ENCODE measurements at regions of chr1 and their contacts with region 1.

Region 1: GRCh38 chr1:155050560-155051341 is at the start of gene ADAM15:
- DNase-seq: peak; percentile 73 to 97
- H3K4me3 ChIP-seq: peak within 1 kb of the TSS; percentile 84
- CTCF ChIP-seq: peak in 1 of 3 donors; percentile 84
- POLR2A ChIP-seq: no peak
- total RNA-seq, gene ADAM15: 232 to 289 (median 279) TPM

Region 2: DNA sequence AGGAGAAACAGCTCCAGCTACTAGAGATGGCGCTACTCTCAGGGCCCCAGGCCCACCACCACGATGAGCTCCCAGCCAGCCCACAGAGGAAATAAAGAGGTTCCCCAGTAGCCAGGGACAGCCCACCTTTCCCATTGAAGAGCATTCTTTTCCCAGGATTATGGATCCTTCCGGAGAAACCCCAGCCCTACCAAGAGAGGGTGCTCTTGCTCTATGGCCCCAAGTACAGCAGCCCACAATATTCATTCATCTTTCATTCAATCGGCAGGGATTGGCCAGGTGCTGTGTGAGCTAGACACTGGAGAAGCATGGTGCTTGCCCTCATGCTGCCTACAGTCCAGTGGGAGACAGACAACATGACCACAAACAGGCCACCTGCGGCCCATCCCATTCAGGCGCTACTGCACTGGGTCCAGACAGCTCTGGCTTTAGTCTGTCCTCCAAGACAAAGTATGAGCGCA is 144.1 kb before region 1 on chr1:
- intact Hi-C with region 1: loop called (anchors 5 kb)
- DNase-seq: peak in 1 of 2 donors; percentile 59
- H3K4me3 ChIP-seq: no peak overlapping the region
- CTCF ChIP-seq: no peak
- POLR2A ChIP-seq: no peak

Region 3: GRCh38 chr1:154955718-154956543 is 94.8 kb before region 1 on chr1 and contains the start of gene PBXIP1:
- intact Hi-C with region 1: loop called (anchors 10 kb)
- DNase-seq: peak; percentile 93 to 94
- H3K4me3 ChIP-seq: peak within 1 kb of the TSS; percentile 45
- CTCF ChIP-seq: no peak
- POLR2A ChIP-seq: no peak
- total RNA-seq, gene PBXIP1: 52.1 to 84.1 (median 63.7) TPM

Measured in lower leg skin (tissue), 4 donors.